ENCODE measurements at regions of chr18 and their contacts with region 1.

Region 1: DNA sequence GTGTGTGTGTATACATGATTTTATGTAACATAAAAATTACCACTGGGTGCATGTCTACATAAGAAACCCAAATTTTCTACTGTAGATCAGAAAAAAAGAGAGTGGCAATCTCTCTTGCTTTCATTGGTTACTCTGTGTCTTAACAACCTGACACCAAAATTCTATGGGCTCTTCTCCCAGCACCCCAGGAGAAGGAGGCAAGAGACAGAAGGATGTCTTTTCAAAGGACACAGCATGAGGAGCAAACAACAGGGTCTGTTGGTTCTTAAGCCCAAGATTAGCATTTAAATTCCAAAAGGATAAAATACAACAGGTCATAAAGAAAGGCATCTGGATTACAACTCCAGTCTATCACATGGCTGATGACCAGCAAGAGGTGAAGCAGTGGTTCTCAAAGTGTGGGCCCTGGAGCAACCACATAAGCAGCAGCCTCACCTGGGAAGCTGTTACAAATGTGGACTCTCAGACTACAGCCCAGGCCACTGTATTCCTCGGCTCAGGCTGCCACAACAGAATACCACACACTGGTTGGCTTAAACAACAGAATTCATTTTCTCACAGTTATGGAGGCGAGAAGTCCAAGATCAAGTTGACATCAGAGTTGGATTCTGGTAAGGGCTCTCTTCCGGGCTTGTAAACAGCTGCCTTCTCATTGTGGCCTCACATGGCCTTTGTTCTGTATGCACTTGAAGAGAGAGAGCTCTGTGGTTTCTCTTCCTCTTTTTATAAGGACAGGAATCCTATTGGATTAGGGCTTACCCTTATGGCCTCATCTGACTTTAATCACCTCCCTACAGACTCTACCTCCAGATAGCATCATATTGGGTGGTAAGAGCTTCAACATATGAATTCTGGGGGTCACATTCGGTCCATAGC is 79.8 kb upstream of the RNF152 start:
- DNase-seq: no peak
- ATAC-seq: peak; percentile 60
- H3K4me3 ChIP-seq: no peak overlapping the region
- H3K4me3 Mint-ChIP-seq: no peak overlapping the region
- H3K27ac ChIP-seq: no peak overlapping the region
- H3K27ac Mint-ChIP-seq: peak overlapping the region in 8 of 9 donors; percentile 0 to 75 (median 62)
- H3K4me1 ChIP-seq: peaks cover 3 to 6% of the 10 kb centered on the region in 2 donors
- H3K4me1 Mint-ChIP-seq: peaks cover 3 to 32% (median 17%) of the 10 kb centered on the region in 7 donors
- H3K27me3 ChIP-seq: no peaks in the 10 kb centered on the region
- H3K27me3 Mint-ChIP-seq: peaks cover 0 to 3% (median 0%) of the 10 kb centered on the region in 5 donors

Region 2: GRCh38 chr18:61943175-61943964 is 29.3 kb before region 1 on chr18:
- CTCF ChIA-PET with region 1: no interaction called
- POLR2A ChIA-PET with region 1: no interaction called
- intact Hi-C with region 1: loop called in 1 of 2 experiments (anchors 2 kb)
- DNase-seq: no peak
- ATAC-seq: no peak
- H3K4me3 ChIP-seq: no peak overlapping the region
- H3K4me3 Mint-ChIP-seq: no peak overlapping the region
- H3K27ac ChIP-seq: no peak overlapping the region
- H3K27ac Mint-ChIP-seq: peak overlapping the region in 1 of 9 donors; percentile 43
- H3K4me1 ChIP-seq: peaks cover 4 to 8% of the 10 kb centered on the region in 2 donors
- H3K4me1 Mint-ChIP-seq: peaks cover 7 to 22% (median 16%) of the 10 kb centered on the region in 7 donors
- H3K27me3 ChIP-seq: no peaks in the 10 kb centered on the region
- H3K27me3 Mint-ChIP-seq: peaks cover 0 to 41% (median 0%) of the 10 kb centered on the region in 5 donors

Region 3: GRCh38 chr18:62088156-62088555 is 115.5 kb after region 1 on chr18:
- CTCF ChIA-PET with region 1: no interaction called
- POLR2A ChIA-PET with region 1: no interaction called
- intact Hi-C with region 1: loop called in 1 of 2 experiments (anchors 5 kb)
- DNase-seq: peak in 7 of 9 donors; percentile 33 to 74 (median 61)
- ATAC-seq: peak; percentile 80
- H3K4me3 ChIP-seq: no peak overlapping the region
- H3K4me3 Mint-ChIP-seq: peak overlapping the region in 7 of 10 donors; percentile 25 to 67 (median 51)
- H3K27ac ChIP-seq: no peak overlapping the region
- H3K27ac Mint-ChIP-seq: peak overlapping the region in 4 of 9 donors; percentile 5 to 30 (median 20)
- H3K4me1 ChIP-seq: peaks cover 0 to 18% of the 10 kb centered on the region in 2 donors
- H3K4me1 Mint-ChIP-seq: peaks cover 7 to 48% (median 36%) of the 10 kb centered on the region in 7 donors
- H3K27me3 ChIP-seq: no peaks in the 10 kb centered on the region
- H3K27me3 Mint-ChIP-seq: no peaks in the 10 kb centered on the region

Region 4: DNA sequence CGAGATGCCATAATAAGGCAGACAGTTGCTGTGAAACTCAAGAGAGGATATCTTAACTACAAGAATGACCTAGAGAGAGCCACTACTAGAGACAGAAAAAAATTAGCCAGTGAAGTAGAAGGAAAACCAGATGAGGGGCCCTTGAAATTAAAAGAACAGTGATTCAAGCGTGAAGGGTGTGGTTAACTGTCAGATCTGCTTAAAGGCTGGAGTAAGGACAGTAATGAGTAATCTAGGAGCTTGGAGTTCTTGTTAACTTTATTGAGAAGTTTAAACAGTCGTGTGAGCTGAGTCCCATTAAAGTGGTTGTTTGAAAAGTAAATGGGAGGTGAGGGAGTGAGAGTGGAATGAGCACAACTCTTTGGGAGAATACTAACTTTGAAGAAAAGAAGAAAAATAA is 193.0 kb after region 1 on chr18:
- CTCF ChIA-PET with region 1: no interaction called
- POLR2A ChIA-PET with region 1: no interaction called
- intact Hi-C with region 1: no loop called
- DNase-seq: no peak
- ATAC-seq: no peak
- H3K4me3 ChIP-seq: no peak overlapping the region
- H3K4me3 Mint-ChIP-seq: no peak overlapping the region
- H3K27ac ChIP-seq: no peak overlapping the region
- H3K27ac Mint-ChIP-seq: no peak overlapping the region
- H3K4me1 ChIP-seq: no peaks in the 10 kb centered on the region
- H3K4me1 Mint-ChIP-seq: peaks cover 0 to 15% (median 8%) of the 10 kb centered on the region in 7 donors
- H3K27me3 ChIP-seq: no peaks in the 10 kb centered on the region
- H3K27me3 Mint-ChIP-seq: no peaks in the 10 kb centered on the region